IMR-90 (cell line): ENCODE measurements at regions of chr7 and their contacts with region 1.

Region 1: GRCh38 chr7:27966219-27966780 is 214.3 kb downstream of the JAZF1 start:
- DNase-seq: no peak
- ATAC-seq: no peak
- H3K4me3 ChIP-seq: no peak overlapping the region
- H3K27ac ChIP-seq: no peak overlapping the region
- H3K4me1 ChIP-seq: no peaks in the 10 kb centered on the region; the same call in 1 of the 2 replicates
- H3K27me3 ChIP-seq: no peaks in the 10 kb centered on the region
- CTCF ChIP-seq: no peak
- POLR2A ChIP-seq: no peak
- RAD21 ChIP-seq: no peak

Region 2: GRCh38 chr7:28002638-28003037 is 36.3 kb after region 1 on chr7:
- CTCF ChIA-PET with region 1: no interaction called
- POLR2A ChIA-PET with region 1: no interaction called
- dilution Hi-C with region 1: no loop called
- in situ Hi-C with region 1: no loop called
- intact Hi-C with region 1: loop called (anchors 5 kb)
- DNase-seq: peak; percentile 13
- ATAC-seq: no peak
- H3K4me3 ChIP-seq: no peak overlapping the region
- H3K27ac ChIP-seq: no peak overlapping the region
- H3K4me1 ChIP-seq: peaks cover 3% of the 10 kb centered on the region; the same call in 1 of the 2 replicates
- H3K27me3 ChIP-seq: no peaks in the 10 kb centered on the region
- CTCF ChIP-seq: no peak
- POLR2A ChIP-seq: no peak
- RAD21 ChIP-seq: no peak